CD14-positive monocyte (primary cell): ENCODE measurements at regions of chr5 and their contacts with region 1.

Region 1: DNA sequence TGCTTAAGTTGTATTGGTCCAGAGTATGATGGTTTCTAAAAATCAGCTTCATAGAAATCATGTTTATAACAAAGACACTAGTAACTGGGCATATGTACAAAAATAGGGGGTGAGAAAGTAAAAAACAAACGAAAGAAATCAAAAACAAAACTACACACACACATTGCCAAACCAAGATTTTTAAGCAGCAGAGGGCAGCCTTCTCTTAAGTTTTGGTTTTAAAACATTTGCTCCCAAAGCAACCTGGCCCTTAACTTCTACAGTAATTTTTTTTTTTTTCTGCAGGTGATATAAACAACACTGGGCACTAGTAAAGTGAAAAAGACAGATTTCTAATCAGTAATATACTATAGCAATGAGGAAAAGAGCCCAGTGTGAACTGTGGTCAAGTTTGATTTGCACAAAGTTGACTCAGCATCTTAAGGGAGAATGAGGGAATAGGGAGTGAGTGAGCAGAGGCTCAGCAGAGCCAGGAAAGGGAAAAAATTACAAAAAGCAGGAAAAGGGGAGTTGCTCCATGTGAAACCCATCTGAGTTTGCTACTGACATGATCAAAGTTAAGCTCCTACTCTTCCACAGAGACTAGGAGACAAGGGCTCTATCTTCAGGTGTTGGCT is 13.4 kb upstream of the GAPT start:
- DNase-seq: no peak
- H3K4me3 ChIP-seq: no peak overlapping the region
- H3K4me3 Mint-ChIP-seq: peak overlapping the region in 1 of 2 donors; percentile 29
- H3K27ac ChIP-seq: no peak overlapping the region
- H3K27ac Mint-ChIP-seq: peak overlapping the region in 2 of 7 donors; percentile 11 to 52
- H3K4me1 ChIP-seq: peaks cover 11 to 26% of the 10 kb centered on the region in 2 donors
- H3K4me1 Mint-ChIP-seq: peaks cover 22% of the 10 kb centered on the region
- H3K27me3 ChIP-seq: no peaks in the 10 kb centered on the region
- H3K27me3 Mint-ChIP-seq: no peaks in the 10 kb centered on the region
- CTCF ChIP-seq: peak; percentile 52

Region 2: GRCh38 chr5:58530942-58531490 is 53.1 kb after region 1 on chr5:
- intact Hi-C with region 1: no loop called
- DNase-seq: no peak
- H3K4me3 ChIP-seq: no peak overlapping the region
- H3K4me3 Mint-ChIP-seq: no peak overlapping the region
- H3K27ac ChIP-seq: no peak overlapping the region
- H3K27ac Mint-ChIP-seq: peak overlapping the region in 1 of 7 donors; percentile 31
- H3K4me1 ChIP-seq: no peaks in the 10 kb centered on the region
- H3K4me1 Mint-ChIP-seq: peaks cover 12% of the 10 kb centered on the region
- H3K27me3 ChIP-seq: no peaks in the 10 kb centered on the region
- H3K27me3 Mint-ChIP-seq: no peaks in the 10 kb centered on the region
- CTCF ChIP-seq: no peak

Region 3: GRCh38 chr5:58849921-58850667 is 372.2 kb after region 1 on chr5:
- intact Hi-C with region 1: loop called (anchors 10 kb)
- DNase-seq: peak in 2 of 3 donors; percentile 13 to 32
- H3K4me3 ChIP-seq: no peak overlapping the region
- H3K4me3 Mint-ChIP-seq: no peak overlapping the region
- H3K27ac ChIP-seq: no peak overlapping the region
- H3K27ac Mint-ChIP-seq: no peak overlapping the region
- H3K4me1 ChIP-seq: peaks cover 1 to 2% of the 10 kb centered on the region in 2 donors
- H3K4me1 Mint-ChIP-seq: peaks cover 5% of the 10 kb centered on the region
- H3K27me3 ChIP-seq: no peaks in the 10 kb centered on the region
- H3K27me3 Mint-ChIP-seq: peaks cover 0 to 2% (median 0%) of the 10 kb centered on the region in 3 donors
- CTCF ChIP-seq: peak; percentile 62